PC-9 (cell line): ENCODE measurements at regions of chr6 and their contacts with region 1.

Region 1: GRCh38 chr6:151916680-151917164 is 109.2 kb downstream of the ESR1 start:
- DNase-seq: peak in 1 of 2 experiments; percentile 79
- H3K4me3 ChIP-seq: no peak overlapping the region
- H3K27ac ChIP-seq: peak overlapping the region; percentile 81
- H3K4me1 ChIP-seq: peaks cover 42% of the 10 kb centered on the region
- H3K27me3 ChIP-seq: no peaks in the 10 kb centered on the region
- CTCF ChIP-seq: no peak

Region 2: GRCh38 chr6:151999194-151999593 is 82.5 kb after region 1 on chr6:
- CTCF ChIA-PET with region 1: no interaction called
- POLR2A ChIA-PET with region 1: interaction called, 11 read pairs
- intact Hi-C with region 1: no loop called
- DNase-seq: peak in 1 of 2 experiments; percentile 53
- H3K4me3 ChIP-seq: no peak overlapping the region
- H3K27ac ChIP-seq: peak overlapping the region; percentile 30; the same call in 1 of the 2 replicates
- H3K4me1 ChIP-seq: peaks cover 11% of the 10 kb centered on the region; the same call in 1 of the 2 replicates
- H3K27me3 ChIP-seq: no peaks in the 10 kb centered on the region
- CTCF ChIP-seq: no peak

Region 3: GRCh38 chr6:153090241-153090930 is 1173.7 kb after region 1 on chr6:
- CTCF ChIA-PET with region 1: no interaction called
- POLR2A ChIA-PET with region 1: no interaction called
- intact Hi-C with region 1: no loop called
- DNase-seq: peak; percentile 6 to 35
- H3K4me3 ChIP-seq: no peak overlapping the region
- H3K27ac ChIP-seq: 0 out of 2 replicates have a peak overlapping the region, but pooled peaks have one; percentile 18
- H3K4me1 ChIP-seq: peaks cover 33% of the 10 kb centered on the region
- H3K27me3 ChIP-seq: no peaks in the 10 kb centered on the region
- CTCF ChIP-seq: no peak